ENCODE measurements at regions of chr6 and their contacts with region 1.

Region 1: GRCh38 chr6:148407372-148407771 is 64.7 kb downstream of the SASH1 start:
- DNase-seq: no peak
- H3K4me3 ChIP-seq: no peak overlapping the region
- H3K27ac ChIP-seq: peak overlapping the region; percentile 81 to 91 (median 87)
- H3K4me1 ChIP-seq: peaks cover 37 to 55% of the 10 kb centered on the region in 2 donors
- H3K27me3 ChIP-seq: no peaks in the 10 kb centered on the region
- CTCF ChIP-seq: no peak
- POLR2A ChIP-seq: no peak

Region 2: GRCh38 chr6:147821295-147821897 is 586.0 kb before region 1 on chr6:
- intact Hi-C with region 1: no loop called
- DNase-seq: no peak
- H3K4me3 ChIP-seq: no peak overlapping the region
- H3K27ac ChIP-seq: no peak overlapping the region
- H3K4me1 ChIP-seq: no peaks in the 10 kb centered on the region
- H3K27me3 ChIP-seq: no peaks in the 10 kb centered on the region
- CTCF ChIP-seq: no peak
- POLR2A ChIP-seq: no peak

Region 3: GRCh38 chr6:148451690-148452089 is 44.3 kb after region 1 on chr6:
- intact Hi-C with region 1: loop called (anchors 10 kb)
- DNase-seq: no peak
- H3K4me3 ChIP-seq: no peak overlapping the region
- H3K27ac ChIP-seq: peak overlapping the region in 2 of 3 donors; percentile 50 to 92
- H3K4me1 ChIP-seq: peaks cover 46 to 60% of the 10 kb centered on the region in 2 donors
- H3K27me3 ChIP-seq: no peaks in the 10 kb centered on the region
- CTCF ChIP-seq: no peak
- POLR2A ChIP-seq: no peak

Measured in thyroid gland (tissue), 4 donors.